GM23248 (cell line): ENCODE measurements at regions of chr4 and their contacts with region 1.

Region 1: GRCh38 chr4:38967260-38968095 is 64.7 kb downstream of the TMEM156 start:
- DNase-seq: peak; percentile 92
- H3K4me3 ChIP-seq: no peak overlapping the region
- H3K27ac ChIP-seq: peak overlapping the region; percentile 95
- H3K4me1 ChIP-seq: peaks cover 17% of the 10 kb centered on the region
- H3K27me3 ChIP-seq: no peaks in the 10 kb centered on the region

Region 2: GRCh38 chr4:37970487-37971101 is 996.9 kb before region 1 on chr4:
- in situ Hi-C with region 1: no loop called
- DNase-seq: peak; percentile 60
- H3K4me3 ChIP-seq: no peak overlapping the region
- H3K27ac ChIP-seq: no peak overlapping the region
- H3K4me1 ChIP-seq: no peaks in the 10 kb centered on the region
- H3K27me3 ChIP-seq: no peaks in the 10 kb centered on the region

Region 3: DNA sequence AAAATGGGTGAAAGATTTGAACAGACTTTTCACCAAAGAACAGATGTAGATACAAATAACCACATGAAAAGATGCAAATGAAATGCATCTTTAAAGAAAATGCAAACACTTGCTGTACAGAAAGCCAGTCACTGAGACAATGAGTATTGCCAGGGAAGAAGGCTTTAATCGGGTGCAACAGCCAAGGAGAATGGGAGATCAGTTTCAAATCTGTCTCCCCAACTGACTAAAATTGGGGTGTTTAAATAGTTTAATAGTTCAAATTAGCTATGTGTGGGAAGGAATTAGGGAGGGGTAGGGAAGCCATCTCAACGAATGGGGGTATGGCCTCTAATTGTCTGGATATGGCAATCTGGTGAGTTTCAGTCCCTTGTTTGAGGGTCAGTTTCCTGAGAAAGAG is 711.9 kb before region 1 on chr4:
- in situ Hi-C with region 1: no loop called
- DNase-seq: no peak
- H3K4me3 ChIP-seq: no peak overlapping the region
- H3K27ac ChIP-seq: no peak overlapping the region
- H3K4me1 ChIP-seq: 0 out of 2 replicates have a peak, but pooled peaks cover 4% of the 10 kb centered on the region
- H3K27me3 ChIP-seq: no peaks in the 10 kb centered on the region

Region 4: GRCh38 chr4:39062094-39062769 is 94.8 kb after region 1 on chr4 and contains the start of gene KLHL5:
- in situ Hi-C with region 1: loop called (anchors 25 kb)
- DNase-seq: peak; percentile 28
- H3K4me3 ChIP-seq: peak within 1 kb of the TSS; percentile 1; the same call in 1 of the 2 replicates
- H3K27ac ChIP-seq: no peak within 1 kb of the TSS
- H3K4me1 ChIP-seq: peaks cover 9% of the 10 kb centered on the region; the same call in 1 of the 2 replicates
- H3K27me3 ChIP-seq: no peaks in the 10 kb centered on the region
- total RNA-seq, gene KLHL5: 43.3 and 49.4 TPM in 2 replicates